MCF 10A (cell line): ENCODE measurements at regions of chr3 and their contacts with region 1.

Region 1: DNA sequence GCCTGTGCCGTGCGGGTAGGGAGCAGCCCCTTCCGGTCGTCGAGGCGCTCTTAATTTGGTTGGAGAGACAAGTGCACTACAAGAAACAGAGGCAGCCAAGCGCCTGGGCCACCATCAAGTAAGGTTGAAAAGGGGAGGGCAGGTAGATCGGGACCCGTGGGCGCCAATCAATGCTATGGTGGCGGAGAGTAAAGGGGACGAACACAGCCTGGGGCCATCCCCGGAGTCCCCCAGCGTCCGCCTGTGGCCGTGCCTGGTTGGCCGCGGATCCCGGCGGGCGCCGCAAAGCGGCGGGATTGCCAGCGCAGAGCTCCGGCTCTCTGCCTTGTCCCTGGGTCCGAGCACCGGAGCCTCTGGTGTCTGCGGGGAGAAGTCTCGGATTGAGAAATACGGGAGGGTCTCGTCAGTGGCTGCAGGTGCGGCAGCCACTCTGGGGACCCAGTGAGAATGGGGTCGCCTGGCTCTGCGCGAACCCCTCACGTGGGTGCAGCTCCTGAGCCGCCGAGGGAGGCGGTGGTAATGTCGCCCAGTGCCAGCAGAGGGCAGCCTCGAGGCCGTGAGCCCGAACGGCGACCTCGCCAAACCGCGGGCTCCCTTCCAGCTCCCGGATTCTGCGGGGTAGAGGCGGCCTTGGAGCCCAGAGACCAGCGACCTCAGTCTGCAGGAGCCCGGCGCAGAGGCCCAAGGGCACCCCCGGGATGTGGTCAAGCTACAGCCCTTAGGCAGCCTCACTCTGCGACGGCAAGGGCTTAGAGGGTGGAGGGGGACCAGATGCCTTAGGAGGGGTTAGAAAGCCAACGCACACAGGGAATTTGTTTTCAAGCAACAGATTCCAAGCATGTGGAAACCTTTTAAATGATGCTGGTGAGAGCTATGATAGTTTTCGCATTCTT is 10.8 kb downstream of the FOXL2 start:
- DNase-seq: peak; percentile 59
- H3K4me3 Mint-ChIP-seq: peak overlapping the region; percentile 68
- H3K27ac Mint-ChIP-seq: no peak overlapping the region
- H3K4me1 Mint-ChIP-seq: no peaks in the 10 kb centered on the region
- H3K27me3 Mint-ChIP-seq: peaks cover 16% of the 10 kb centered on the region
- CTCF ChIP-seq: peak; percentile 84

Region 2: DNA sequence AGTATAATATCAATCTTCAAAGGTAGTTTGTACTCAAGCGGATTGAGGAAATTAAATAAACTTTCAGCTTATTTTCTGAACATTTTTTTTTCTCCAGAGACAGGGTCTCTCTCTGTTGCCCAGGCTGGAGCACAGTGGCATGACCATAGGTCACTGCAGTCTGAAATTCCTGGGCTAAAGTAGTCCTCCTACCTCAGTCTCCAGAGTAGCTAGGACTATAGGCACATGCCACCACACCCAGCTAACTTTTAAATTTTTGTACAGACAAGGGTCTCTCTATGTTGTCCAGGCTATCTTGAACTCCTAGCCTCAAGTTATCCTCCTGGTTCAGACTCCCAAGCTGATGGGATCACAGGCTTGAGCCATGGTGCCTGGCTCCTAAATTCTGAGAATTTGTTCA is 230.4 kb before region 1 on chr3:
- CTCF ChIA-PET with region 1: no interaction called
- POLR2A ChIA-PET with region 1: no interaction called
- intact Hi-C with region 1: no loop called
- DNase-seq: no peak
- H3K4me3 Mint-ChIP-seq: no peak overlapping the region
- H3K27ac Mint-ChIP-seq: no peak overlapping the region
- H3K4me1 Mint-ChIP-seq: no peaks in the 10 kb centered on the region
- H3K27me3 Mint-ChIP-seq: no peaks in the 10 kb centered on the region
- CTCF ChIP-seq: no peak

Region 3: DNA sequence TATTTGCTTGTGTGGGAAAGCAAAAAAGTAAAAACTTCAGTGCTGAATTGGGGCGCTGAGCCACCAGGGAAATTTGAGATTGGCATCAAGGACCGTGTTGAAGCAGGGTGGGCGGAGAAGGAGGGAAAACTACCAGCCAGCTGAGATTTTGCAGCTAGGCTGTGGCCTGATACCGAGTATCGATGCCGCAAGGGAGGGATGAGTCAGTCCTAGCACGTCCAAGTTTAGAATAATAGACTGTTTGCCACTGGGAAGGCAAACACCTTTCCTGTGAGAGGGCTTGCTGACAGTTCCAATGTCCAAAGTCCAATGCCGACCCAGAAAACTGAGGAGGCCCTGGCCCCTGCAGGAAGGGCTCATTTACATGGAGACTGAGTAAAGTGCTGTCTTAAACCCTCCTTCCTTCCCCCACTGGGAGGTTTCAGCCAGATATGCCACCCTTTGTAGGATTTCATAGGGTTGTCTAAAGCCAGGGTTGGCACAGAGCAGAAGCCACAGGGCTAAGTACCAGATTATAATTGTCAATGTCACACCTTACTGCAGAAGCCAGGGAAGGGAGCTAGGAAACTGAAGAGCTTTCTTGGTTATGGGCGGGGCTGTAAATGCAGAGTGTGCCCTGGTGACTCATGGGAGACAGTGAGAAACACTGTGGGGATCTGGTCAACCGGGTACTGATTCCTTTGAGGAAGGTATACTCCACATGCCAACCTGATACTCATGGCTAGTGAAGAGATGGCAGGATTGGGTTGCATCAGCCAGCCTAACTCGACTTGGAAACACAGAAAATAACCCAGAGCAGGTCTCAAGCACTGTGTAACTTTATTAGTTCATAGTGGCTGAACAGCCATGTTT is 72.9 kb before region 1 on chr3:
- CTCF ChIA-PET with region 1: no interaction called
- POLR2A ChIA-PET with region 1: no interaction called
- intact Hi-C with region 1: no loop called
- DNase-seq: peak; percentile 94
- H3K4me3 Mint-ChIP-seq: peak overlapping the region; percentile 46
- H3K27ac Mint-ChIP-seq: peak overlapping the region; percentile 89
- H3K4me1 Mint-ChIP-seq: peaks cover 20% of the 10 kb centered on the region
- H3K27me3 Mint-ChIP-seq: no peaks in the 10 kb centered on the region
- CTCF ChIP-seq: no peak

Region 4: GRCh38 chr3:138947060-138947852 is 11.2 kb after region 1 on chr3 and contains the starts of genes FOXL2 and FOXL2NB:
- CTCF ChIA-PET with region 1: interaction called, 14 read pairs
- POLR2A ChIA-PET with region 1: no interaction called
- intact Hi-C with region 1: no loop called
- DNase-seq: no peak
- H3K4me3 Mint-ChIP-seq: peak within 1 kb of the TSS; percentile 61
- H3K27ac Mint-ChIP-seq: no peak within 1 kb of the TSS
- H3K4me1 Mint-ChIP-seq: no peaks in the 10 kb centered on the region
- H3K27me3 Mint-ChIP-seq: peaks cover 51% of the 10 kb centered on the region
- CTCF ChIP-seq: no peak
- total RNA-seq, gene FOXL2: 0.17 and 0.30 TPM in 2 replicates
- total RNA-seq, gene FOXL2NB: 0.14 and 0.20 TPM in 2 replicates

Region 5: DNA sequence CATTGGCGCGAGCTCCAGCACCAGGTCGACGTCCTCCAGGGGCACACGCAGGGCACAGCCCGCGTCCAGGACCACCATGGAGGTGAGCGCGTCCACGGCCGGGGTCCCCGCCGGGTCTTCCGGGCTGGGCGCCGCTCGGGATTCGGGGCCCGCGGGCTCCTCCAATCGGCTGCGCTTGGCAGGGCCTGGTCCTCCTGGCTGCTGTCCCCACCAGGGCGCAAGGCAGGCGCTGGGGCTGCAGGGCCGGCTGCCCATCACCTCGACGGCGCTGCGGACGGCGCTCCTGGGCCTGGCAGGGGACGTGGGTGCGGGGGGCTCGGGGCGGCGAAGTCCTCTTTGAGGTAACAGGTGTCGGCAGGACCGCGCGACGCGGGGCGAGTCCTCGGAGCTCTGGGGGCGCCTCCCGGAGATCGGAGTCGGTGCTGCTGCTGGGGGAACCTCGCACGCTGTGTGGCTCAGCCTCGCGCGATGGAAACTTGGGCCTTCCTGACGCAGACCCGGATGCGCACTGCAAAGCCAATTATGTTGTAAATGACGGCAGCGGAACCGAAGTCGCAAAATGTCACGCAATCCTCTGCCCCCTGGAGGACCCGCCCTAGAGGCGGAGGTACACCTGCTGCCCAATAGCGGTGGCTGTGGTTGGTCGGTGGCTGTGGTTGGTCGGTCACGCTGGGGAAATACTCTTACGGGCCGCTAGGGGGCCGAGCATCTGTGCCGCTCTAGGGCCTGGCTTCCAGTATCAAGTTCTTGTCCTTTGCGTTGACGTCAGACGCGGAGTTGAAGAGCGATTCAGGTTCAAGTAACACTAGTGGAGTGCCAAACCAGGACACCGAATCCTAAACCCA is 108.5 kb after region 1 on chr3 and contains the start of gene PRR23C:
- CTCF ChIA-PET with region 1: no interaction called
- POLR2A ChIA-PET with region 1: no interaction called
- intact Hi-C with region 1: no loop called
- DNase-seq: no peak
- H3K4me3 Mint-ChIP-seq: no peak within 1 kb of the TSS
- H3K27ac Mint-ChIP-seq: no peak within 1 kb of the TSS
- H3K4me1 Mint-ChIP-seq: no peaks in the 10 kb centered on the region
- H3K27me3 Mint-ChIP-seq: no peaks in the 10 kb centered on the region
- CTCF ChIP-seq: no peak
- total RNA-seq, gene PRR23C: not detected in 2 replicates